Activated CD4-positive, alpha-beta T cell treated with anti-CD3 and anti-CD28 coated beads for 36 hours (primary cell): ENCODE measurements at regions of chr17 and their contacts with region 1.

Region 1: GRCh38 chr17:74748529-74749365 is at the start of gene NHERF1:
- DNase-seq: peak; percentile 97
- ATAC-seq: peak; percentile 90
- H3K4me3 Mint-ChIP-seq: peak within 1 kb of the TSS; percentile 98
- H3K27ac Mint-ChIP-seq: peak within 1 kb of the TSS; percentile 91
- H3K4me1 Mint-ChIP-seq: peaks cover 56% of the 10 kb centered on the region
- H3K27me3 Mint-ChIP-seq: no peaks in the 10 kb centered on the region
- total RNA-seq, gene NHERF1: 115 to 170 TPM

Region 2: GRCh38 chr17:74601944-74602572 is 146.7 kb before region 1 on chr17:
- CTCF ChIA-PET with region 1: no interaction called
- POLR2A ChIA-PET with region 1: no interaction called
- intact Hi-C with region 1: no loop called
- DNase-seq: peak; percentile 64
- ATAC-seq: peak; percentile 52
- H3K4me3 Mint-ChIP-seq: no peak overlapping the region
- H3K27ac Mint-ChIP-seq: no peak overlapping the region
- H3K4me1 Mint-ChIP-seq: peaks cover 35% of the 10 kb centered on the region
- H3K27me3 Mint-ChIP-seq: peaks cover 2% of the 10 kb centered on the region

Region 3: GRCh38 chr17:74736513-74737298 is 12.0 kb before region 1 on chr17 and contains the start of gene RAB37:
- CTCF ChIA-PET with region 1: interaction called, 32 read pairs
- POLR2A ChIA-PET with region 1: interaction called, 3 read pairs
- intact Hi-C with region 1: no loop called
- DNase-seq: peak; percentile 65
- ATAC-seq: peak; percentile 19
- H3K4me3 Mint-ChIP-seq: peak within 1 kb of the TSS; percentile 68
- H3K27ac Mint-ChIP-seq: peak within 1 kb of the TSS; percentile 79
- H3K4me1 Mint-ChIP-seq: peaks cover 49% of the 10 kb centered on the region
- H3K27me3 Mint-ChIP-seq: no peaks in the 10 kb centered on the region
- total RNA-seq, gene RAB37: 2.7 to 3.5 TPM

Region 4: DNA sequence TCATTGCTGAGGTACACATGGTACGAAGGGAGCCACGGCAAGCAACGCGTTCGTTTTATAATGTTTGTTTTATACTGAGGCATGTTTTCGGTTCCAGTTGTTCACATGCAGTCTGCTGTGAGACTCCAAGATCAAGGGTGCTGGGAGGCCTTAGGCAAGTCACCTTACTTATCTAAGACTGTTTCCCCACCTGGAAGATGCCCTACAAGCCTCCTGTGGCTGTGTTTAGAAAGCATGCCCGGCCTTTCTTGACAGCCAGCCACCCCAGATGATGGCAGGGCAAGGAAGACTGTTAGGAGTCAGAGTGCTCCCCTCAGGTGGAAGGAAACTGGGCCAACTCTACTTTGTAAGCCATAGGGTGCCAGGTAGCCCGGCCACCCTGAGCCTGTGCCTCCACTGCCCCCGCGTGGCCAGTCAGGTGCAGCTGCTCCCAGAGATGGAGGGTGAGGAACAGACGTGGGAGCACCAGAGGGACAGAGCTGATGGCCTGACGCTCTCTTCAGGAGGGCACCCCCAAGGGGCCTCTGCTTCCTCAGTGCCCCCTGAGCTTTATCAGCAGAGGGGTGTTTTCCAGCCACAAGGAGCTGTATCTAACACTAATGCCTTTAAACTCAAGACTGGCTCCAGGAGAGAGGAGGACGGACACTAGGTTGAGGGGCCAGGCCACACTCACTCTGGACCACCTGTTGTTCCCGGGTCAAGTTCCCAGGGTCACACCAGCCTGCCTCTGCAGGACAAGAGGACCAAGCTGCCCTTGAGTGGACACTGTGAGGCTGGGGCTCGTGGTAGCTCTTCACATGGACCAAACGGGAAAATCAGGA is 22.0 kb after region 1 on chr17:
- CTCF ChIA-PET with region 1: interaction called, 93 read pairs
- POLR2A ChIA-PET with region 1: interaction called, 4 read pairs
- intact Hi-C with region 1: loop called (anchors 1 to 2 kb)
- DNase-seq: peak; percentile 84
- ATAC-seq: peak; percentile 93
- H3K4me3 Mint-ChIP-seq: no peak overlapping the region
- H3K27ac Mint-ChIP-seq: peak overlapping the region; percentile 60
- H3K4me1 Mint-ChIP-seq: peaks cover 23% of the 10 kb centered on the region
- H3K27me3 Mint-ChIP-seq: no peaks in the 10 kb centered on the region

Region 5: DNA sequence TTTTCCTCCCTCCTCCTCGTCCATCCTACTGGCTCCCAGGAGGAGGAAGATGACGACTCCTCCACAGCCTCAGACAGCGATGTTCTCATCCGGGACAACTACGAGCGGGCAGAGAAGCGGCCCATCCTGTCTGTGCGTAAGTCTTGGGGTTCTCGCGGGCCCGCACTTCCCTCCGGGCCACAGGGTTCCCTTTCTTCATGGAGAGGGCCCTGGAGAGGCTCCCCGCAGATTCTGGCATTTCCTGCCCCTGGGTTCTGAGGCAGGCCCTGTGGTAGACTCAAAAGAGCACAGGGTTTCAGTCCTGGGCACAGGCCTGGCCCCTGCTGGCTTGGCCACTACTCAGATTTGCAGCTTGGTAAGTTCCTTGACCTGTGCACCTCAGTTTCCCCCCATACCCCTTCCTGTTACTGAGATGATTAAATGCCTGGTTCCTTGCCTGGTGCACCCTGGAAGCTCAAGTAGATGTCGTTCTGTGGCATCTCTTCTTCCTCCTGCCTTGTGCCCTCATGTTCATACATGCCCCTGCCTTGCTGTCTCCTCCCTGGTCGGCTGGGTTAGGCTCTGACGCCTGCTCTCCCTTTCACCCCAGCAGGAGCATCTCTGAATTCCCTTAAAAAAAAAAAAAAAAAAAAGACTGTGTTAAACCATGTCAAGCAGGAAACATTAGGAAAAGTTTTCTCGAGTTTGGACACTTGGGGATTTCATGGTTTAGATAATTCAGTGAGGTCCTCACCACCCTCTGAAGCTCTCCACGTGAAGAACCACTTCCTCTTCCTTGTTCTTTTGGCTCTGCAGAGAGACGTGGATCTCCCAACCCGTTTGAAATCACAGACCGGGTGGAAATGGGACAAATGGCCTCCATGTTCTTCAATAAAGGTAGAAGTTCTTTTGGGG is 41.7 kb after region 1 on chr17:
- CTCF ChIA-PET with region 1: interaction called, 35 read pairs
- POLR2A ChIA-PET with region 1: interaction called, 7 read pairs
- intact Hi-C with region 1: loop called (anchors 1 to 2 kb)
- DNase-seq: no peak
- ATAC-seq: no peak
- H3K4me3 Mint-ChIP-seq: no peak overlapping the region
- H3K27ac Mint-ChIP-seq: no peak overlapping the region
- H3K4me1 Mint-ChIP-seq: peaks cover 32% of the 10 kb centered on the region
- H3K27me3 Mint-ChIP-seq: no peaks in the 10 kb centered on the region

Region 6: DNA sequence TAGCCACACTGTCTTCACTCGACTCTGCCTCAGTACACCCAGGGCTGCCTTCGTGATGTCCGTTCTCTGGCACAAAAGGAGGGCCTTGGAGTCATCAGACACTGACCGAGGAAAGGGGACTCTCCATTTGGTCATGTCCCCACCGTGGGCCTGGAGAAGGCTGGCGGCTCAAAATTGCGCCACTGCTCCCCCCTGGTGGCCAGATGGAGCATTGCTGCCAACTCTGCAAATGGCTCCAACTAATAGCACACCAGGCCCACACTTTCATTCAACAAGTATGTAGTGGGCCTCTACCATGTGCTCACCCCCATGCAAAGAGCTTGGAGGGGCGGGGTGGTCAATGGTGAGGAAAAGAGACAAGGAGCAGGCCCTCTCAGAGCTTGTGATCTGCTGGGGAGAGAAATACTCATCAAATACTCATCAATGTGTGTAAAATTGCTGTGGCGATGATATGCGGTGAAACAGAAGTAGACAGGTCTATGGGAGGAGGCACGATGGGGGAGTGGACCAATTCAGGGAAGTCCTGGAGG is 116.2 kb after region 1 on chr17:
- CTCF ChIA-PET with region 1: interaction called, 31 read pairs
- POLR2A ChIA-PET with region 1: no interaction called
- intact Hi-C with region 1: loop called (anchors 1 kb)
- DNase-seq: peak; percentile 83
- ATAC-seq: peak; percentile 65
- H3K4me3 Mint-ChIP-seq: no peak overlapping the region
- H3K27ac Mint-ChIP-seq: peak overlapping the region; percentile 39
- H3K4me1 Mint-ChIP-seq: peaks cover 11% of the 10 kb centered on the region
- H3K27me3 Mint-ChIP-seq: peaks cover 12% of the 10 kb centered on the region